Psoas muscle (tissue), 8 donors: ENCODE measurements at regions of chr6 and their contacts with region 1.

Region 1: GRCh38 chr6:37819885-37820717 is 574 bp downstream of the ZFAND3 start:
- DNase-seq: peak; percentile 68 to 78
- ATAC-seq: peak; percentile 24 to 64 (median 51)
- H3K4me3 ChIP-seq: peak overlapping the region; percentile 87
- H3K27ac ChIP-seq: peak overlapping the region; percentile 99
- H3K4me1 ChIP-seq: peaks cover 42% of the 10 kb centered on the region
- H3K27me3 ChIP-seq: no peaks in the 10 kb centered on the region
- CTCF ChIP-seq: no peak

Region 2: DNA sequence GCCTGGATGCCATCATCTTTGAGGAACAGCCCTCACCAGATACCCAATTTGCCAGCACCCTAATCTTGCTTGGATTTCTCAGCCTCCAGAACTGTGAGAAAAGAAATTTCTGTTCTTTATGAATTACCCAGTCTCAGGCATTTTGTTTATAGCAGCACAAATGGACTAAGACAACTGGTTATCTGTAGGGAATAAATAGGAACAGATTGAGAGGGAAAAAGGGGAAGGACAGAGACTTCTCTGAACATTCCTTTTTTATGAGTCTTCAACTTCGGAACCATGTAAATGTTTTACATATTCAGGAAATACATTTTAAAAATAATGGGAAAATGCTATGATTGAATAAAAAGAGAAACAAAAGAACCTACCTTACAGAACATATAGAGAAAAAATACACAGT is 1356.4 kb before region 1 on chr6:
- intact Hi-C with region 1: no loop called
- DNase-seq: no peak
- ATAC-seq: no peak
- H3K4me3 ChIP-seq: no peak overlapping the region
- H3K27ac ChIP-seq: no peak overlapping the region
- H3K4me1 ChIP-seq: peaks cover 30% of the 10 kb centered on the region
- H3K27me3 ChIP-seq: no peaks in the 10 kb centered on the region
- CTCF ChIP-seq: no peak

Region 3: GRCh38 chr6:37713529-37714119 is 106.5 kb before region 1 on chr6:
- intact Hi-C with region 1: no loop called
- DNase-seq: peak in 1 of 2 donors; percentile 36
- ATAC-seq: peak in 2 of 4 donors; percentile 26 to 36
- H3K4me3 ChIP-seq: no peak overlapping the region
- H3K27ac ChIP-seq: no peak overlapping the region
- H3K4me1 ChIP-seq: no peaks in the 10 kb centered on the region
- H3K27me3 ChIP-seq: no peaks in the 10 kb centered on the region
- CTCF ChIP-seq: no peak

Region 4: DNA sequence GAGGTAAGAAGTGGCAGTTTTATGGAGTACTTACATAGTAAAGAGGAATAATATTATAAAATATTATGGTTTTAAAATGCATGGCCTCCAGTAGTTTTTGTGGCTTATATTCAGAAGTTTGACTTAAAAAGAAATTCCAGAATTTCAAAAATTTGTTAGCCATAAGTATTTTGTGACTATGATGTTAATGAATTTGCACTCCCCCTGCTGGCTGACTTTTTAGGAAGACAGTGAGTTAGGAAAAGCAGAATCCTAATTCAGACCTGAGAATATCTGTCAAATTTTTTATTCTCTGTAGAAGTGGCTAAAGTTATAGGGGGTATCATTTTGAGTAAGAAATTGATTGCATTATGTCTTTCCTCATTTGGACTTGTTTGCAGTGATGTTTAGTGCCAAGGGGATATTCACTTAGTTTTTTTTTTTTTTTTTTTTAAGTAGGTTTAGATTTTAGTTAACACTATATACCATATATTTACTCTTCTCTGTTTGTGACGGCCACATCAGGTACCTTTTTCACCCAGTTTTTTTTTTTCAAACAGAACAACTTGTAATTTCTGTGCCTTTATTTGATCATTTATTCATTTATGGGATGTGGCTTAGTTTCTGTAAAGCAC is 40.2 kb after region 1 on chr6:
- intact Hi-C with region 1: loop called in 1 of 2 experiments (anchors 5 kb)
- DNase-seq: no peak
- ATAC-seq: peak in 1 of 4 donors; percentile 47
- H3K4me3 ChIP-seq: no peak overlapping the region
- H3K27ac ChIP-seq: no peak overlapping the region
- H3K4me1 ChIP-seq: peaks cover 43% of the 10 kb centered on the region
- H3K27me3 ChIP-seq: no peaks in the 10 kb centered on the region
- CTCF ChIP-seq: peak; percentile 62